ENCODE measurements at regions of chr15 and their contacts with region 1.

Region 1: DNA sequence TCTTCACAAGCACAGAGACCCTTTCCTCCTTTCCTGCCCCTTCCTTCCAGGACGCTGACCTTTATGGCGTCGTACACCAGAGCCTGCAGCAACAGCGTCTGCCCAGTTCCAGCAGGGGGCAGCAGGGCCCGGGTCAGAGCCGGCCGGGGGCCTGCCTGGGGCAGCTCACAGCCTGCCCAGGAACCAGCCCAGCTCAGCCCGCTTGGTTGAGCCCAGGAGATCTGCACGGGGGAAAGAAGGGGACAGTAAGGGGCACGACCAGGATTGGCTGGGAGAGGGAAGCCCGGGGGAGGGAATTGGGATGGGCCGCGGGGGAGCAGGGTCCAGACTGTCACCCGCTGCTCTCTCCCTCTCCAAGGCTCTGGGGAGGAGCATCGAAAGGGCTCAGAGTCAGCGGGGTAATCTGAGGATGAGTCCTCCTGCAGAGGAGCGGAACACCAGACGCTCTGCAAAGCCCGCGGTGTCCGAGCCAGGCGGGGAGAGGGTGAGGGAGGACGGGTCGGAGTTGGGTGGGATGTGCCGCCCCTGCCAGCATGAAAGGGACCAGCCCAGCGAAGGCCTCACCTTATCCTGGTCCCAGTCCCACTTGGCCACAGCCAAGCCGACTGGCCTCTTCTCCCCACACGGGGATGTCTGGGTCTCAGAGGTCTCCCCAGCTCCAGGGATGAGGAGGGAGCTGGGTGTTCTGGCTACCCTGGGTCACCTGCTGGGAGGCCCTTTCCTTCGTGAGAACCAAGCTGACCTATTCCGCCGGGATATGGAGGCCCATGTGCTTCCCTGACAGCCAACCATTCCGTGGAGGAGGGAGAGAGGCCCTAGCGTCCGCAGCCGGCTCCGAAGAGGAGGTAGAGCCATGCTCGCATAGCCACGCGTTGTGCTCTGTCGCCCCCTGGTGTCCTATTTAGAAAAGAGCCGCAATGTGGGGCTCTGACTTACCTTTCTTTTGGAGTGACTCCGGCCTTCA is 7.4 kb upstream of the IGDCC3 start:
- DNase-seq: peak; percentile 80 to 91 (median 86)
- ATAC-seq: peak; percentile 98
- H3K4me3 ChIP-seq: peak overlapping the region; percentile 12 to 30
- H3K27ac ChIP-seq: no peak overlapping the region
- H3K4me1 ChIP-seq: peaks cover 7 to 13% of the 10 kb centered on the region in 2 donors
- H3K27me3 ChIP-seq: peaks cover 0 to 49% of the 10 kb centered on the region in 2 donors
- CTCF ChIP-seq: peak; percentile 80 to 86

Region 2: DNA sequence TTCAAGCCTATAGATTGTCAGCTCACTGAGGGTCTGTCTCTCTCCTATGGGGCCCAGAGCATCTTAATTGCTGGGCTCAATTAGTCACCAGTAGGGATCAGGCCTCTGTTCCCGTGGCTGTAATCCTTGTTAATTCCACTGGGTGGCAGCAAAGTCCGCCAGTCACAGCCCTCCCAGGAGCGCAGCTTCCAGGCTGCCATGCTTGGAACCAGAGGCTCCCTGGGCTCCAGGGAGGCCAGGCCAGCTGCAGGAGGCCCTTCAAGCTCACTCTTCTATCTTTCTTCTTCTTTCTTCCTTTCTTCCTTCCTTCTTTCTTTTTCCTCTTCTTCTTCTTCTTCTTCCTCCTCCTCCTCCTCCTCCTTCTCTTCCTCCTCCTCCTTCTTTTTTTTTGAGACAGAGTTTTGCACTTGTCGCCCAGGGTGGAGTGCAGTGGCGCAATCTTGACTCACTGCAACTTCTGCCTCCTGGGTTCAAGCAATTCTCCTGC is 66.3 kb before region 1 on chr15:
- intact Hi-C with region 1: loop called in 1 of 2 experiments (anchors 5 kb)
- DNase-seq: peak in 3 of 4 donors; percentile 79 to 88 (median 86)
- ATAC-seq: peak; percentile 100
- H3K4me3 ChIP-seq: no peak overlapping the region
- H3K27ac ChIP-seq: no peak overlapping the region
- H3K4me1 ChIP-seq: no peaks in the 10 kb centered on the region
- H3K27me3 ChIP-seq: peaks cover 0 to 16% of the 10 kb centered on the region in 2 donors
- CTCF ChIP-seq: peak; percentile 91 to 94

Region 3: DNA sequence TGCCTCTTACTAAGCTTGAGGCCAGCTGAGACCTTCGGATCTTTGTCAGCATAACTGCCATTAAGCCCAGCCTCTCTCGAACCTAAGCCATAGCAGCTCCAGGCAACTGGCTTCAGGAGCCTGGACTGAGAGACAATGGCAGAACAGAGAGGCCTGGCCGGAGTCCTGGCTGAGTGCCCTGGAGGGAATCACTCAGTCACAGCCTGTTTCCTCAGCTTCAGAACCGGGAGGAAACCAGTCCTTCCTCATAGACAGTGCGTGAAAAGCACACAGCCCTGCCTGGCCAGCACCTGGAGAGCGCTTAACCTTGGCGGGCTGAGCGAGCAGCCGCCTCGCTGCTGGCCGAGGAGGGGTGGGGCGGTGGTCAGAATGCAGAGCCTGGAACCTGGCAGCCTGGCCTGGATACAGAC is 59.1 kb before region 1 on chr15:
- intact Hi-C with region 1: loop called in 1 of 2 experiments (anchors 5 kb)
- DNase-seq: peak in 1 of 4 donors; percentile 56
- ATAC-seq: peak; percentile 59
- H3K4me3 ChIP-seq: no peak overlapping the region
- H3K27ac ChIP-seq: no peak overlapping the region
- H3K4me1 ChIP-seq: no peaks in the 10 kb centered on the region
- H3K27me3 ChIP-seq: peaks cover 0 to 24% of the 10 kb centered on the region in 2 donors
- CTCF ChIP-seq: no peak

Region 4: GRCh38 chr15:65426216-65426853 is 41.2 kb after region 1 on chr15:
- intact Hi-C with region 1: no loop called
- DNase-seq: no peak
- ATAC-seq: no peak
- H3K4me3 ChIP-seq: no peak overlapping the region
- H3K27ac ChIP-seq: no peak overlapping the region
- H3K4me1 ChIP-seq: peaks cover 6 to 9% of the 10 kb centered on the region in 2 donors
- H3K27me3 ChIP-seq: peaks cover 0 to 31% of the 10 kb centered on the region in 2 donors
- CTCF ChIP-seq: no peak

Measured in left lung (tissue), 14 donors.